ENCODE measurements at regions of chr13 and their contacts with region 1.

Region 1: DNA sequence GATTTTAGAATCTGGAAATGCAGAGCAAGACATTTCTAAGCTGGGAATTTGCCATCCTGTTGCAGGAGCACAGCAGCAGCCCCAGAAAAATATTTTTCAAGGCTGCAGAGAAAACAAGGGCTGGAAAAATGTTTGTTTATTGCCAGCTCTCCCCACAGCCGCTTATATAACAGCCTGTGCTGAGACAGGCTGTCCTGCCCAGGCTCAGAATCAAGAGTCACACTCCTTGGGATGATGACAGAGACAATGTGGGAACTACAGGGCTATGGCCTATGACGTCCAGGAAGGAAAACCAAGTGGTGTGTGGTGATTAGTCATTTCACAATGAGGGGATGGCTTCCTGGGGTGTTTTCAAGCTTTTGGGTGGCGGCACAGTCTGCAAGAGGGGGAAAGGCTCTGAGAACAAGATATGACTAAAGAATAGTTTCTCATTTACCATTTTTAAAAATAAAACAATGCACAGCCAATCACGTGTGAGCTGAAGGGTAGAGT is 136.3 kb upstream of the SERP2 start:
- DNase-seq: peak; percentile 97
- H3K4me3 ChIP-seq: no peak overlapping the region
- H3K27ac ChIP-seq: peak overlapping the region; percentile 84
- H3K4me1 ChIP-seq: peaks cover 21% of the 10 kb centered on the region
- H3K27me3 ChIP-seq: no peaks in the 10 kb centered on the region
- CTCF ChIP-seq: no peak
- POLR2A ChIP-seq: no peak

Region 2: DNA sequence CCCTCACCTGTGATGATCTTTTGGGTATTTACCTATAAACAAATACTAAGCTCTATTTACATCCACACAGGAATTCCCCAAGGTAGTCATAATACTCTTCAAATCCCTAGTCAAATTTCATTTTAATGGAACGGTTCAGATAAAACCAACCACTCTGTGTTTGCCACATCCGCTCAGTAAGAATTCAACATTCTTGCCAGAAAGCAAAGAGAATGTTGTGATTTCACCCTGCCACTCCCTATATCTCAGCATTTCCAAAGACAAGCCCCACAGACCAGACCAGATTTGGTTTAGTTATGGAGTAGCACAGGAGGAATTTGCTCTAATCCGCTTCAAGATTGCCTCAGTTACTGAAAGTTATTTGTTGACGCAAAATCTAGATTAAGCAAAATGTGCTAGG is 30.6 kb after region 1 on chr13:
- CTCF ChIA-PET with region 1: no interaction called
- POLR2A ChIA-PET with region 1: no interaction called
- dilution Hi-C with region 1: no loop called
- intact Hi-C with region 1: no loop called
- DNase-seq: no peak
- H3K4me3 ChIP-seq: no peak overlapping the region
- H3K27ac ChIP-seq: no peak overlapping the region
- H3K4me1 ChIP-seq: no peaks in the 10 kb centered on the region
- H3K27me3 ChIP-seq: peaks cover 0 to 8% of the 10 kb centered on the region in 2 experiments
- CTCF ChIP-seq: no peak
- POLR2A ChIP-seq: no peak

Region 3: GRCh38 chr13:44364348-44365049 is 127.2 kb after region 1 on chr13:
- CTCF ChIA-PET with region 1: interaction called, 3 read pairs
- POLR2A ChIA-PET with region 1: no interaction called
- dilution Hi-C with region 1: no loop called
- intact Hi-C with region 1: loop called (anchors 1 kb)
- DNase-seq: peak; percentile 90
- H3K4me3 ChIP-seq: no peak overlapping the region
- H3K27ac ChIP-seq: peak overlapping the region; percentile 89
- H3K4me1 ChIP-seq: peaks cover 51% of the 10 kb centered on the region
- H3K27me3 ChIP-seq: no peaks in the 10 kb centered on the region
- CTCF ChIP-seq: no peak
- POLR2A ChIP-seq: peak; percentile 25

Region 4: GRCh38 chr13:45325806-45326205 is 1088.5 kb after region 1 on chr13:
- CTCF ChIA-PET with region 1: no interaction called
- POLR2A ChIA-PET with region 1: no interaction called
- dilution Hi-C with region 1: no loop called
- intact Hi-C with region 1: loop called (anchors 5 kb)
- DNase-seq: peak; percentile 86
- H3K4me3 ChIP-seq: no peak overlapping the region
- H3K27ac ChIP-seq: peak overlapping the region; percentile 31
- H3K4me1 ChIP-seq: peaks cover 32% of the 10 kb centered on the region
- H3K27me3 ChIP-seq: no peaks in the 10 kb centered on the region
- CTCF ChIP-seq: no peak
- POLR2A ChIP-seq: no peak

Measured in endothelial cell of umbilical vein (primary cell).